GM12878 (cell line): ENCODE measurements at regions of chr4 and their contacts with region 1.

Region 1: GRCh38 chr4:76430519-76431388 is 4.3 kb upstream of the SHROOM3 start:
- DNase-seq: no peak
- ATAC-seq: peak; percentile 77
- H3K4me3 ChIP-seq: no peak overlapping the region
- H3K27ac ChIP-seq: no peak overlapping the region
- H3K4me1 ChIP-seq: no peaks in the 10 kb centered on the region
- H3K27me3 ChIP-seq: peaks cover 0 to 4% of the 10 kb centered on the region in 2 experiments; a peak in 2 of 4 replicates
- CTCF ChIP-seq: peak; percentile 53 to 54 (median 53)
- EP300 ChIP-seq: no peak
- POLR2A ChIP-seq: no peak
- RAD21 ChIP-seq: peak; percentile 77

Region 2: GRCh38 chr4:76233957-76234678 is 196.6 kb before region 1 on chr4:
- CTCF ChIA-PET with region 1: no interaction called
- POLR2A ChIA-PET with region 1: no interaction called
- RAD21 ChIA-PET with region 1: no interaction called
- SMC1A ChIA-PET with region 1: no interaction called
- in situ Hi-C with region 1: no loop called
- intact Hi-C with region 1: no loop called
- DNase-seq: no peak
- ATAC-seq: no peak
- H3K4me3 ChIP-seq: no peak overlapping the region
- H3K27ac ChIP-seq: no peak overlapping the region
- H3K4me1 ChIP-seq: no peaks in the 10 kb centered on the region
- H3K27me3 ChIP-seq: no peaks in the 10 kb centered on the region; a peak in 1 of 4 replicates
- CTCF ChIP-seq: no peak
- EP300 ChIP-seq: no peak
- POLR2A ChIP-seq: no peak
- RAD21 ChIP-seq: no peak

Region 3: DNA sequence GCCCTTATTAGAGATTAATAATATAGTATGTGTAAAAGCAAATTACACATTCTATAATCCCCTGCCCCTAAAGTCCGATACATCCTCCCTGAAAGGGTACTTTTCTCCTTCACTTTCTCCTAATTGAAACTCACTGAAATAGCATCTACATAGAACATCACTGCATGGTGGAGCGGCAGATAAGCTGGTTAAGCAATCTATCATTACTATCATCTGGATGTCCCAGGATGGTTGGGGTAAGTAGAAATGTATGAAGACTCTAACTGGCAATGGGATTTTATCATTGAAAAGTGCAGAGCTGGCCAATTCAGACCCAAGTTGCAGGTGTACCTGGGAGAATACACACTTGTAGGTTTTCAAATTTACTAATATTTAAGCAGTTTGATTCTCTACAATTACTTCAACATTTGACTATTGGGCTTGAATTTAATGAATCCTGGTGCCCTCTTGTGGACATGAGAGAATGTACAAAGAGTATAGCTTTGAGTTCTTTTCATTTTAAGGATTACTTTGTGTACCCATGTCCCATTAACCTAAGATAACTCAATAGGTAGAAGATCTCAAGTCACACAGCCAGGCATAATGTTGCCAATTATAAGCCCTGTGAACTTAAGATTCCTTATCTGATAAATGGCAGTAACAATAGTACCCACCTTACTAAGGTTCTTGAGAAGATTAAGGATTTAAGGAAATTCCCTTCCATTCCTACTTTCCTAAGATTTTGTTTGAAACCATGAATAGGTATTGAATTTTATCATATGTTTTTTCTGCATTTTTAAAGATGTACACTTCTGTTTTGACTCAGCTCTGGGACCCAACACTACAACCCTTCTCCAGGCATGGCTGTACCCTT is 74.1 kb after region 1 on chr4:
- CTCF ChIA-PET with region 1: interaction called, 46 read pairs
- POLR2A ChIA-PET with region 1: no interaction called
- RAD21 ChIA-PET with region 1: interaction called, 12 read pairs
- SMC1A ChIA-PET with region 1: interaction called, 23 read pairs
- in situ Hi-C with region 1: no loop called
- intact Hi-C with region 1: loop called (anchors 1 kb)
- DNase-seq: no peak
- ATAC-seq: peak; percentile 76
- H3K4me3 ChIP-seq: no peak overlapping the region
- H3K27ac ChIP-seq: no peak overlapping the region
- H3K4me1 ChIP-seq: no peaks in the 10 kb centered on the region
- H3K27me3 ChIP-seq: no peaks in the 10 kb centered on the region
- CTCF ChIP-seq: peak; percentile 49 to 58 (median 52); a peak in 5 of 6 replicates
- EP300 ChIP-seq: no peak
- POLR2A ChIP-seq: no peak
- RAD21 ChIP-seq: peak; percentile 73

Region 4: GRCh38 chr4:76526585-76526990 is 95.8 kb after region 1 on chr4:
- CTCF ChIA-PET with region 1: no interaction called
- POLR2A ChIA-PET with region 1: no interaction called
- RAD21 ChIA-PET with region 1: no interaction called
- SMC1A ChIA-PET with region 1: no interaction called
- in situ Hi-C with region 1: no loop called
- intact Hi-C with region 1: no loop called
- DNase-seq: no peak
- ATAC-seq: no peak
- H3K4me3 ChIP-seq: no peak overlapping the region
- H3K27ac ChIP-seq: no peak overlapping the region
- H3K4me1 ChIP-seq: no peaks in the 10 kb centered on the region
- H3K27me3 ChIP-seq: peaks cover 0 to 2% of the 10 kb centered on the region in 2 experiments; a peak in 2 of 4 replicates
- CTCF ChIP-seq: no peak
- EP300 ChIP-seq: no peak
- POLR2A ChIP-seq: no peak
- RAD21 ChIP-seq: no peak

Region 5: GRCh38 chr4:76748649-76749048 is 317.9 kb after region 1 on chr4:
- CTCF ChIA-PET with region 1: interaction called, 4 read pairs
- POLR2A ChIA-PET with region 1: no interaction called
- RAD21 ChIA-PET with region 1: no interaction called
- SMC1A ChIA-PET with region 1: no interaction called
- in situ Hi-C with region 1: loop called (anchors 5 kb)
- intact Hi-C with region 1: loop called (anchors 1 kb)
- DNase-seq: no peak
- ATAC-seq: peak; percentile 73
- H3K4me3 ChIP-seq: no peak overlapping the region
- H3K27ac ChIP-seq: no peak overlapping the region
- H3K4me1 ChIP-seq: no peaks in the 10 kb centered on the region
- H3K27me3 ChIP-seq: no peaks in the 10 kb centered on the region
- CTCF ChIP-seq: peak; percentile 34 to 57 (median 54); a peak in 5 of 6 replicates
- EP300 ChIP-seq: no peak
- POLR2A ChIP-seq: no peak
- RAD21 ChIP-seq: peak; percentile 85